ENCODE measurements at regions of chr11 and their contacts with region 1.

Region 1: GRCh38 chr11:46238967-46239800 is 38.3 kb upstream of the CREB3L1 start:
- DNase-seq: peak; percentile 80
- H3K4me3 Mint-ChIP-seq: peak overlapping the region; percentile 78
- H3K27ac Mint-ChIP-seq: no peak overlapping the region
- H3K4me1 Mint-ChIP-seq: peaks cover 48% of the 10 kb centered on the region
- H3K27me3 Mint-ChIP-seq: peaks cover 13% of the 10 kb centered on the region

Region 2: GRCh38 chr11:45917623-45918330 is 321.4 kb before region 1 on chr11 and contains the start of gene PEX16:
- intact Hi-C with region 1: loop called (anchors 1 kb)
- DNase-seq: peak; percentile 97
- H3K4me3 Mint-ChIP-seq: peak within 1 kb of the TSS; percentile 98
- H3K27ac Mint-ChIP-seq: peak within 1 kb of the TSS; percentile 92
- H3K4me1 Mint-ChIP-seq: peaks cover 22% of the 10 kb centered on the region
- H3K27me3 Mint-ChIP-seq: peaks cover 10% of the 10 kb centered on the region
- total RNA-seq, gene PEX16: 37.4 and 44.6 TPM in 2 replicates

Region 3: DNA sequence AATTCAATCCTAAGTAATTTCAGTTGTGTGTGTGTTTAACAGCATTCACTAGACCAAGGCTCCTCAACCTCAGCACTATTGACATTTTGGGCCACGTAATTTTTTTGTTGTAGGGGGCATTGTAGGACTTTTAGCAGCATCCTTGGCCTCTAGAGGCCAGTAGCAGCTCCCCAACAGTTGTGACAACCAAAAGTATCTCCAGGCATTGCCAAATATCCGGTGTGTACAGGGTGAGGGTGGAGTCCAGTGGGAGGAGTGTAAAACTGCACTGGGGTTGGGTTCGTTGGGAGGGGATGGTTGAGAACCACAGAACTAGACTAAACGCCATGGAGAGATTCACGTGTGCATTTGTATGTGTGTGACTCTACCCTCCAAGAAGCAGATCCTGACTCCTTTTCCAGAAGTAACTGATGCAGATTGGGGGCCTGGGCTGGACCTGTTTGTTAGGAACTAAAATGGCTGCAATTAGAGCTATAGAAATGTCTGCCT is 112.0 kb before region 1 on chr11:
- intact Hi-C with region 1: loop called (anchors 2 kb)
- DNase-seq: peak; percentile 68
- H3K4me3 Mint-ChIP-seq: no peak overlapping the region
- H3K27ac Mint-ChIP-seq: peak overlapping the region; percentile 50
- H3K4me1 Mint-ChIP-seq: peaks cover 21% of the 10 kb centered on the region
- H3K27me3 Mint-ChIP-seq: no peaks in the 10 kb centered on the region

Region 4: DNA sequence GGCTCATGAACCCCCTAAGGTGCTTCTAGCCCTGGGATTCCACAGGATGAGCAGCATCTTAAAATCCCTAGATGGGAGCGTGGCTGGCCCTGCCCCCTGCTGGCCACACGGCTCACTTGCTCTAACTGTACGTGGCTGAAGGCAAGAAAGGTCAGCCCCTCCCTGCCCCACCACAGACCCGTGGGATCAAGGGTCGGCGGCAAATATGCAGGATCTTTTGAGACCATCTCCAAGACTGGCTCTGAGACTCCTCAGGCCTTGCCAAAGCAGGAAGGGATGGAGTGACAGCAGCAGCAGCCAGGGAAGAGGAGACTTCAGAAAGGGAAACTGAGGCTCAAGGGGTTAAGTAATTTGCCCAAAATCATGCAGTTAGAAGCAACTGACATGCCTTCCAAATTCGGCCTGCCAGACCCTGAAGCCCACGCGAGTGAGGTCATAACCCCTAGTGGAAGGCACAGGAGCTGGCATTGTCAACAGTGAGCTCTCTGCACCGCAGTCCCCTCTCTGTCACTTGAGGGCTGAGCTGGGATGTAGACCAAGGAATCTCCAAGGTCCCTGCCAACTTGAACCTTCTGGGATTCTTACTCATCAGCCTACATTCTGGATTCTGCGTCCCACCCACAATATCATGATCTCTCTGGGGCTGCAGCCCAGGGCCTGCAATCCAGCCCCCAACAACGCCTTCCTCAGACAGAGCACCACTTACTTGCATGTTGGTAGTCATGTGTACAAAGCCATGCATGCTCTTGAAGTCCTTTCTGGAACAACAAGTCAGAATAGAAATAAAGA is 69.6 kb after region 1 on chr11:
- intact Hi-C with region 1: loop called (anchors 1 kb)
- DNase-seq: peak; percentile 43
- H3K4me3 Mint-ChIP-seq: no peak overlapping the region
- H3K27ac Mint-ChIP-seq: no peak overlapping the region
- H3K4me1 Mint-ChIP-seq: peaks cover 19% of the 10 kb centered on the region
- H3K27me3 Mint-ChIP-seq: peaks cover 2% of the 10 kb centered on the region

Region 5: DNA sequence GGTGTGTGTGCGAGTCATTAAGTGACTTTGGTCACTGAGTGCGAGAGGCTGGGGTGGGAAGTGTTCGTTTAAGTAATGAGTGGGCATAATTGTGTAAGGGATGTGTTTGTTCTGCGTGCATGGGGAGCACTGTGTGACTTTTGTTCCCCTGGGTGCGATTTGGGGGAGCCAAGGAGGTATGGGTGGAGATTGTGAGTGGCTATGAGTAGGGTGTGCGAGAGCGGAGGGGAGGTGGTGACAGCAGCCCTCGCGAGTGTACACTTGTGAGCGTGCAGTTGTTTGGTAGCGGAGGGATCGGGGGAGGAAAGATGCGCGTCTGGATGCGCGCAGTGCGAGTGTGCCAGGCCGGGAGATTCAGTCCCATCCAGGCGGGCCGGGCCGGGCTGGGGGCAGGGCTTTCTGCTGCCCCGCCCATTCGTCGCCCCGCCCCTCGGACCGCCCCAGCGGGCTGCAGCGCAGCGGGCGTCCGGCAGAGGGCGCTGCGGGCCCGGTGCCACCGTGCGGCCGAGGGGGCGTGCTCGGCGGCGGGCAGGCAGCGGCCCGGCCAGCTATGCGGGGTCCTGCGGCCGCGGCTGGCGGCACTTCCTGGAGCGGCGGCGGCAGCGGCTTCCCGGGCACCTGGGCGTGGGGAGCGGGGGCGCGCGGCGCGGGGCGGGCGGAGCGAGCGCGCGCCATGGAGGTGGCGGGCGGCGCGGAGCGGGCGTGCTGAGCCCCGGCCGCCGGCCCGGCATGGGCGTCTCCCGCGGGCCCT is 107.9 kb after region 1 on chr11 and contains the start of gene DGKZ:
- intact Hi-C with region 1: loop called (anchors 1 kb)
- DNase-seq: peak; percentile 91
- H3K4me3 Mint-ChIP-seq: peak within 1 kb of the TSS; percentile 88
- H3K27ac Mint-ChIP-seq: peak within 1 kb of the TSS; percentile 89
- H3K4me1 Mint-ChIP-seq: peaks cover 72% of the 10 kb centered on the region
- H3K27me3 Mint-ChIP-seq: peaks cover 3% of the 10 kb centered on the region
- total RNA-seq, gene DGKZ: 101 TPM in 2 replicates

Region 6: GRCh38 chr11:46380340-46381047 is 141.3 kb after region 1 on chr11:
- intact Hi-C with region 1: loop called (anchors 5 kb)
- DNase-seq: peak; percentile 54
- H3K4me3 Mint-ChIP-seq: peak overlapping the region; percentile 78
- H3K27ac Mint-ChIP-seq: peak overlapping the region; percentile 75
- H3K4me1 Mint-ChIP-seq: no peaks in the 10 kb centered on the region
- H3K27me3 Mint-ChIP-seq: peaks cover 2% of the 10 kb centered on the region

Region 7: GRCh38 chr11:46593550-46594373 is 354.6 kb after region 1 on chr11 and contains the start of gene AMBRA1:
- intact Hi-C with region 1: loop called (anchors 10 kb)
- DNase-seq: peak; percentile 81
- H3K4me3 Mint-ChIP-seq: peak within 1 kb of the TSS; percentile 93
- H3K27ac Mint-ChIP-seq: peak within 1 kb of the TSS; percentile 87
- H3K4me1 Mint-ChIP-seq: peaks cover 44% of the 10 kb centered on the region
- H3K27me3 Mint-ChIP-seq: no peaks in the 10 kb centered on the region
- total RNA-seq, gene AMBRA1: 35.7 and 37.9 TPM in 2 replicates

Measured in activated T-helper 1 cell treated with anti-CD3 and anti-CD28 coated beads, Interleukin-12 subunit alpha, Interleukin-12 subunit beta, Interleukin-2, Interleukin-4 antibody, amounts not matched to agents 30 ng/mL and 10 ng/mL and 1 ng/mL, durations not matched to agents 14 hours and 24 hours and 36 hours (primary cell).